Naive thymus-derived CD4-positive, alpha-beta T cell (primary cell): ENCODE measurements at regions of chr20 and their contacts with region 1.

Region 1: GRCh38 chr20:49610701-49611538 is 43.0 kb upstream of the PTGIS start:
- DNase-seq: peak; percentile 26 to 85 (median 61)
- ATAC-seq: peak; percentile 84
- H3K4me3 ChIP-seq: no peak overlapping the region
- H3K4me3 Mint-ChIP-seq: peak overlapping the region in 8 of 10 donors; percentile 23 to 75 (median 43)
- H3K27ac ChIP-seq: no peak overlapping the region
- H3K27ac Mint-ChIP-seq: peak overlapping the region in 1 of 9 donors; percentile 74
- H3K4me1 ChIP-seq: peaks cover 4 to 11% of the 10 kb centered on the region in 2 donors
- H3K4me1 Mint-ChIP-seq: peaks cover 7 to 28% (median 15%) of the 10 kb centered on the region in 7 donors
- H3K27me3 ChIP-seq: no peaks in the 10 kb centered on the region
- H3K27me3 Mint-ChIP-seq: peaks cover 0 to 10% (median 9%) of the 10 kb centered on the region in 5 donors

Region 2: GRCh38 chr20:49338061-49338460 is 272.9 kb before region 1 on chr20:
- CTCF ChIA-PET with region 1: no interaction called
- POLR2A ChIA-PET with region 1: no interaction called
- intact Hi-C with region 1: loop called in 1 of 2 experiments (anchors 1 kb)
- DNase-seq: no peak
- ATAC-seq: no peak
- H3K4me3 ChIP-seq: no peak overlapping the region
- H3K4me3 Mint-ChIP-seq: no peak overlapping the region
- H3K27ac ChIP-seq: no peak overlapping the region
- H3K27ac Mint-ChIP-seq: no peak overlapping the region
- H3K4me1 ChIP-seq: no peaks in the 10 kb centered on the region
- H3K4me1 Mint-ChIP-seq: peaks cover 0 to 4% (median 0%) of the 10 kb centered on the region in 7 donors
- H3K27me3 ChIP-seq: peaks cover 0 to 5% of the 10 kb centered on the region in 2 donors
- H3K27me3 Mint-ChIP-seq: peaks cover 3 to 12% (median 9%) of the 10 kb centered on the region in 5 donors

Region 3: GRCh38 chr20:49575551-49576060 is 35.3 kb before region 1 on chr20:
- CTCF ChIA-PET with region 1: interaction called, 5 read pairs
- POLR2A ChIA-PET with region 1: no interaction called
- intact Hi-C with region 1: loop called in 1 of 2 experiments (anchors 5 kb)
- DNase-seq: no peak
- ATAC-seq: no peak
- H3K4me3 ChIP-seq: no peak overlapping the region
- H3K4me3 Mint-ChIP-seq: no peak overlapping the region
- H3K27ac ChIP-seq: no peak overlapping the region
- H3K27ac Mint-ChIP-seq: no peak overlapping the region
- H3K4me1 ChIP-seq: no peaks in the 10 kb centered on the region
- H3K4me1 Mint-ChIP-seq: peaks cover 0 to 63% (median 0%) of the 10 kb centered on the region in 7 donors
- H3K27me3 ChIP-seq: no peaks in the 10 kb centered on the region
- H3K27me3 Mint-ChIP-seq: peaks cover 6 to 28% (median 21%) of the 10 kb centered on the region in 5 donors

Region 4: DNA sequence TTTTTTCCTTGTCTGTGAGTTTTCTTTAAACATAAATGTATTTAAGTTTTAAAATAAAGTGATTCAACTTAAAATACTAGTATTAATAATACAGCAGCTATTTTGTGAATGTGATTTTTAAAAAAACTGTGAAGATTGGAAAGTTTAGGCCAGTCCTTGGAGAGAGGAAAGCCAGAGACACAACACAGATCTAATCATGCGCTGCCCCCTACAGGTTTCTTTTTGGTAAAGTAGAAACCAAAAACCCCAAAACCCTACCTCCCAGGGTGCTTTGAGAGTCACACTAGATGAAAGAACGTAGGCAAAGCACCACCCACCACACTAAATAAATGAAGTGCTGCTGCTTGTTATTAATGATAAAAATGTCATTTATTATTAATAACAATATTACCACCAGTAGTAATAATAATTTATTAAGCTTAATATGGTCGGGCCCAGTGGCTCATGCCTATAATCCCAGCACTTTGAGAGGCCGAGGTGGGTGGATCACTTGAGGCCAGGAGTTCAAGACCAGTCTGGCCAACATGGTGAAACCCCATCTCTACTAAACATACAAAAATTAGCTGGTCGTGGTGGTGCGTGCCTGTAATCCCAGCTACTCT is 235.4 kb after region 1 on chr20:
- CTCF ChIA-PET with region 1: interaction called, 31 read pairs
- POLR2A ChIA-PET with region 1: no interaction called
- intact Hi-C with region 1: loop called (anchors 1 kb)
- DNase-seq: peak in 8 of 9 donors; percentile 34 to 70 (median 60)
- ATAC-seq: peak; percentile 90
- H3K4me3 ChIP-seq: no peak overlapping the region
- H3K4me3 Mint-ChIP-seq: no peak overlapping the region
- H3K27ac ChIP-seq: no peak overlapping the region
- H3K27ac Mint-ChIP-seq: no peak overlapping the region
- H3K4me1 ChIP-seq: no peaks in the 10 kb centered on the region
- H3K4me1 Mint-ChIP-seq: peaks cover 9 to 25% (median 13%) of the 10 kb centered on the region in 7 donors
- H3K27me3 ChIP-seq: no peaks in the 10 kb centered on the region
- H3K27me3 Mint-ChIP-seq: no peaks in the 10 kb centered on the region

Region 5: DNA sequence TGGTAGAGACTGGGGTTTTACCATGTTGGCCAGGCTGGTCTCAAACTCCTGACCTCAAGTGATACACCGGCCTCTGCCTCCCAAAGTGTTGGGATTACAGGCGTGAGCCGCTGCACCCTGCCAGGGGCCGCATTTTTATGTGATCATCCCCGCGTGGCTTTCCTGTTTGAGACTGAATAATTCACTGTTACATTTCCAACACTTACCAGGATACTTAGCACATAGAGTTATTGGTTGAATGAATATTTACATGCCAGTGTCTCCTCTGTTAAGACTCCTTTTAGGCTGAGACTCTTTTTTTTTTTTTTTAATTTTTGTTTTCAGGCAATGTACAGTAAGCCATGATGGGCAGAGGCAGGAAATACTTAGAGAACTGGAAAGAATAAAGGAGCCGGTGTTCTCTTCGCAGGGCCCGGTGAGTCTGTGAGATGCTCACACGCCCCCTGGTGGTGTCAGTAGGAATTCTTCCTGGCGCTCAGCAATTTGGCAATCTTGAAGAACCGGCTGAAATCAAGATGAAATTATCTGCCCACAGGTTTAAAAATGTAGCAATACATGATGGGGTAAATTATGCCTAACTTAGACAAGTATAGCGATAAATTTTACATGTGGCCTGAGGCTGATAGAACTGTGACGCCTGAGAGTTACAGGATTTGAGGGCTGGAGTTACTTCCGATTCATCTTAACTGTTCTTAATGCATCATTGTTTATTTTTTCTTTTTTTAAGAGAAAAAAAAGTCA is 317.7 kb after region 1 on chr20:
- CTCF ChIA-PET with region 1: interaction called, 5 read pairs
- POLR2A ChIA-PET with region 1: no interaction called
- intact Hi-C with region 1: loop called (anchors 1 kb)
- DNase-seq: peak; percentile 60 to 84 (median 79)
- ATAC-seq: peak; percentile 99
- H3K4me3 ChIP-seq: no peak overlapping the region
- H3K4me3 Mint-ChIP-seq: peak overlapping the region in 6 of 10 donors; percentile 30 to 66 (median 54)
- H3K27ac ChIP-seq: peak overlapping the region; percentile 1
- H3K27ac Mint-ChIP-seq: peak overlapping the region in 7 of 9 donors; percentile 23 to 93 (median 80)
- H3K4me1 ChIP-seq: peaks cover 0 to 8% of the 10 kb centered on the region in 2 donors
- H3K4me1 Mint-ChIP-seq: peaks cover 3 to 13% (median 7%) of the 10 kb centered on the region in 7 donors
- H3K27me3 ChIP-seq: no peaks in the 10 kb centered on the region
- H3K27me3 Mint-ChIP-seq: peaks cover 0 to 2% (median 0%) of the 10 kb centered on the region in 5 donors